Activated B cell treated with CpG ODN at 0.5 μM for 24 hours (primary cell): ENCODE measurements at regions of chr19 and their contacts with region 1.

Region 1: GRCh38 chr19:3762501-3763459 is at the start of gene MRPL54:
- DNase-seq: peak; percentile 99
- ATAC-seq: peak; percentile 81
- H3K4me3 Mint-ChIP-seq: peak within 1 kb of the TSS; percentile 96
- H3K27ac Mint-ChIP-seq: peak within 1 kb of the TSS; percentile 100
- H3K4me1 Mint-ChIP-seq: peaks cover 43% of the 10 kb centered on the region
- H3K27me3 Mint-ChIP-seq: no peaks in the 10 kb centered on the region
- CTCF ChIP-seq: no peak
- total RNA-seq, gene MRPL54: 81.2 and 90.0 TPM in 2 replicates

Region 2: DNA sequence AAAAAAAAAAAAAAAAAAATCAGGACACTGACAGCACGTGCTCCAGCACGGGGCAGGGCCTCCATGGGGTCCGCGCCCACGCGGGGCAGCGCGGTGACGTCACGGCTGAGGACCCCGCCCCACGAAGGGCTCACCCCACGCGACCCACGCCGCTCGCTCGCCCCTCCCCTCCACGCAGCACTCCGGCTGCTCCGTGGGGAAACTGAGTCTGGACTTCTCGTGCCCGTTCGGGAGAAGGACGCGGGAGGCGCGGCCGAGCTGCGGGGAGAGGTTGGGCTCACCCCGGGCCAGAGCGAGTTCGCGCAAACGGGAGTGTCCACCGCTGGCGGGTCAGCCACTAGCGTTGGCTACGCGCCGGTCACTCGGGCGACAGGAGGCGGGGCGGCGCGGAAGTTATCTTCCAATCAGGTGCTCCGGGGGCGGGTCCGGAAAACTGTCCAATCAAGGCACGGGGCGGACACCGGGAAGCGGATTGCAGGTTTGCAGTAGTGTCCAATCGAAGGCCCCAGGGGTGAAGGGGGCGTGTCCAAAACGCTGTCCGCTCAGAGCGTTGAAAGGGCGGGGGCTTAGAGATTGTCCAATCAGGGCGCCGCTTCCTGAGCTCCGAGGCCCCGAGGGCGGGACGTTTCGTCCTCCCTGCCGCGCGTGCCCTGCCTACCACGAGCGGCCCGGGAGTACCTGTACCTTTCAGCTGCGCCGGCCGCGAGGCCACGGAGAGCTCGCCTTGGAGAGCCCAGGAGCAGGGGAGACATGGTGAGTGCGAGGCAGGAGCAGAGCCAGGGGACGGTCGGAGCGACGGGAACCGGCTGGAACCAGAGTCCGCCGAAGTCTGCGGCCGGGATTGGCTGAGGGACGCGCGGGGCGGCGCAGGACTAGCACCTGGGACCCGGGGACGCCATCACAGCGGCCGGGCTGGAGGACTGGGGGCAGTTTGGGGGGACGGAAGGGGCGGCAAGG is 862.2 kb before region 1 on chr19 and contains the start of gene ZNF57:
- CTCF ChIA-PET with region 1: no interaction called
- POLR2A ChIA-PET with region 1: no interaction called
- intact Hi-C with region 1: loop called (anchors 5 kb)
- DNase-seq: peak; percentile 89
- ATAC-seq: peak; percentile 99
- H3K4me3 Mint-ChIP-seq: peak within 1 kb of the TSS; percentile 99
- H3K27ac Mint-ChIP-seq: peak within 1 kb of the TSS; percentile 87
- H3K4me1 Mint-ChIP-seq: peaks cover 10% of the 10 kb centered on the region
- H3K27me3 Mint-ChIP-seq: no peaks in the 10 kb centered on the region
- CTCF ChIP-seq: no peak
- total RNA-seq, gene ZNF57: 4.6 and 5.3 TPM in 2 replicates

Region 3: DNA sequence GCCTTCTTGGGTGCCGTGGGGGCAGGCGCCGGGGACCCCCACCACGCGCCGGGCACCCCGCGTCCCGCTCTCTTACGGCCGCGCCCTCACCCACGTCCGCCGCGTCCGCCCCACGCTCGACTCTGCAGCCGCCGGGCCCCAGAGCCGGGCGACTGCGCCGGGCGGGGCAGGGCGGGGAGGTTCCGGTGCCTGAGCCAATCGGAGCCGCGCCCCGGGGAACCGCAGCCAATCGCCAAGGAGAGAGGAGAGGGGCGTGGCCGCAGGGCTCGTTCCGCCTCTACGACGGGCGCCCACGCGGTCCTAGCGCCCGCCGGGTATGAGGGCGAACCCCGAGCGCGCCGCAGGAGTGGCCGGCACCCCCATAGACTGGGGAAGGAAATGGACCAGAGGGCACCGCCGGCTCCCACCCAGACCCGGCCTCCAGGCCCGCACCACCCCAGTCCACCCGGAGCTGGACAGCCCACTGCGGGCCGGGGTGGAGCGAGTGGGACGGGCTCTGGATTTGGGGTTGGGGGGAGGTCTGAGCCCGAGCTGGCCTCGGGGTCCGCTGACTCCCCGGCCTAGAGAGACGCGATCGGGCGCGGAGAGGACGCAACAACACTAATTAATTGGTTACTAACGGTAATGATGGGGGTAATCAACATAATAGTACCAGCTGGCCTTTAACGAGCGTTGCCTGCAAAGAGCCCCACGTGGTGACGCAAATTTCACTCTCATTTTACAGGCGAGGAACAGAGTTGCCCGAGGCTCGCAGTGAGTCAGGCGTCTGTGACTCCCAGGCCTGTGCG is 205.1 kb before region 1 on chr19 and contains the start of gene MFSD12:
- CTCF ChIA-PET with region 1: no interaction called
- POLR2A ChIA-PET with region 1: interaction called, 6 read pairs
- intact Hi-C with region 1: loop called (anchors 5 kb)
- DNase-seq: peak; percentile 94
- ATAC-seq: peak; percentile 86
- H3K4me3 Mint-ChIP-seq: peak within 1 kb of the TSS; percentile 89
- H3K27ac Mint-ChIP-seq: peak within 1 kb of the TSS; percentile 86
- H3K4me1 Mint-ChIP-seq: peaks cover 57% of the 10 kb centered on the region
- H3K27me3 Mint-ChIP-seq: no peaks in the 10 kb centered on the region
- CTCF ChIP-seq: no peak
- total RNA-seq, gene MFSD12: 59.2 and 76.9 TPM in 2 replicates

Region 4: DNA sequence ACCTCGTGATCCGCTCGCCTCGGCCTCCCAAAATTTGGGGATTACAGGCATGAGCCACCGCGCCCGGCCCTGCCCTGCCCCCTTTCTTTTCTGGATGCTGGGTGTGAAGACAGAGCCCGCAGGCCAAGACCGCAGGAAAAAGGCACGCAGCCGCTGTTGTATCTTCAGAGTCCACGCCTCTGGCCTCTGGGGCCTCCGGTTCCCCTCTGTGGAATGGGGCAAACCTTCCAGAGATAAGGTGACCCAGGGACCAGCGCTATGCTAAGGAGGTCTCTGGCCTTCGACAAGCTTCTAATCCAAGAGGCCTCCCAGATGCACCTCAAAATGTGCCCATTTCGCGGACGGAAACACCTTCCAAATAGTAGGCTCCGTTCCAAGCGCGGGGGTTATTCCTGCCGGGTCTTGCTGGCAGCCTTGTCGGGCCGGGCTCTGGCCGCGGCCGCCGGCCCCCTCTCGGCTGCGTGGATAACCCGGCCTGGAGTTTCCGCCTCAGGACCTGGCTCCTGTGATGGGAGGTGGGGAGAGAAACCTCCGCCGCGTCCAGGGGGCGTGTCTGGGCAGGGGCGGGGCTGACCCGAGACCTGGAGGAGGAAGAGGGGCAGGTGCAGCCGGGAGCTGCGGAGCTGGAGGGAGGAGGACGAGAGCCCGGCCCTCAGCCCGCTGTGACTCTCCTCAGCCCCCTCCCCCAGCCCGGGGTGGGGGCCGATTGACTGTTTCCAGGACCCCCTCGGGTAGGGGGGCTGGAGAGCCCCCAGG is 41.5 kb before region 1 on chr19:
- CTCF ChIA-PET with region 1: interaction called, 4 read pairs
- POLR2A ChIA-PET with region 1: no interaction called
- intact Hi-C with region 1: loop called (anchors 2 kb)
- DNase-seq: peak; percentile 80
- ATAC-seq: peak; percentile 99
- H3K4me3 Mint-ChIP-seq: peak overlapping the region; percentile 50
- H3K27ac Mint-ChIP-seq: no peak overlapping the region
- H3K4me1 Mint-ChIP-seq: peaks cover 12% of the 10 kb centered on the region
- H3K27me3 Mint-ChIP-seq: peaks cover 14% of the 10 kb centered on the region
- CTCF ChIP-seq: no peak

Region 5: GRCh38 chr19:3970808-3971598 is 208.2 kb after region 1 on chr19 and contains the start of gene DAPK3:
- CTCF ChIA-PET with region 1: no interaction called
- POLR2A ChIA-PET with region 1: interaction called, 15 read pairs
- intact Hi-C with region 1: loop called (anchors 5 kb)
- DNase-seq: peak; percentile 94
- ATAC-seq: peak; percentile 97
- H3K4me3 Mint-ChIP-seq: peak within 1 kb of the TSS; percentile 88
- H3K27ac Mint-ChIP-seq: peak within 1 kb of the TSS; percentile 84
- H3K4me1 Mint-ChIP-seq: peaks cover 27% of the 10 kb centered on the region
- H3K27me3 Mint-ChIP-seq: no peaks in the 10 kb centered on the region
- CTCF ChIP-seq: no peak
- total RNA-seq, gene DAPK3: 37.5 and 42.2 TPM in 2 replicates

Region 6: GRCh38 chr19:4400135-4400936 is 637.6 kb after region 1 on chr19 and contains the start of gene SH3GL1:
- CTCF ChIA-PET with region 1: no interaction called
- POLR2A ChIA-PET with region 1: interaction called, 4 read pairs
- intact Hi-C with region 1: loop called (anchors 5 kb)
- DNase-seq: peak; percentile 95
- ATAC-seq: peak; percentile 65
- H3K4me3 Mint-ChIP-seq: peak within 1 kb of the TSS; percentile 88
- H3K27ac Mint-ChIP-seq: peak within 1 kb of the TSS; percentile 91
- H3K4me1 Mint-ChIP-seq: peaks cover 59% of the 10 kb centered on the region
- H3K27me3 Mint-ChIP-seq: no peaks in the 10 kb centered on the region
- CTCF ChIP-seq: peak; percentile 58
- total RNA-seq, gene SH3GL1: 33.8 and 43.7 TPM in 2 replicates

Region 7: GRCh38 chr19:4831304-4831978 is 1068.7 kb after region 1 on chr19 and contains the start of gene TICAM1:
- CTCF ChIA-PET with region 1: no interaction called
- POLR2A ChIA-PET with region 1: interaction called, 13 read pairs
- intact Hi-C with region 1: no loop called
- DNase-seq: peak; percentile 78
- ATAC-seq: peak; percentile 76
- H3K4me3 Mint-ChIP-seq: peak within 1 kb of the TSS; percentile 90
- H3K27ac Mint-ChIP-seq: peak within 1 kb of the TSS; percentile 94
- H3K4me1 Mint-ChIP-seq: peaks cover 40% of the 10 kb centered on the region
- H3K27me3 Mint-ChIP-seq: no peaks in the 10 kb centered on the region
- CTCF ChIP-seq: no peak
- total RNA-seq, gene TICAM1: 34.4 and 39.4 TPM in 2 replicates